ENCODE measurements at regions of chr3 and their contacts with region 1.

Region 1: DNA sequence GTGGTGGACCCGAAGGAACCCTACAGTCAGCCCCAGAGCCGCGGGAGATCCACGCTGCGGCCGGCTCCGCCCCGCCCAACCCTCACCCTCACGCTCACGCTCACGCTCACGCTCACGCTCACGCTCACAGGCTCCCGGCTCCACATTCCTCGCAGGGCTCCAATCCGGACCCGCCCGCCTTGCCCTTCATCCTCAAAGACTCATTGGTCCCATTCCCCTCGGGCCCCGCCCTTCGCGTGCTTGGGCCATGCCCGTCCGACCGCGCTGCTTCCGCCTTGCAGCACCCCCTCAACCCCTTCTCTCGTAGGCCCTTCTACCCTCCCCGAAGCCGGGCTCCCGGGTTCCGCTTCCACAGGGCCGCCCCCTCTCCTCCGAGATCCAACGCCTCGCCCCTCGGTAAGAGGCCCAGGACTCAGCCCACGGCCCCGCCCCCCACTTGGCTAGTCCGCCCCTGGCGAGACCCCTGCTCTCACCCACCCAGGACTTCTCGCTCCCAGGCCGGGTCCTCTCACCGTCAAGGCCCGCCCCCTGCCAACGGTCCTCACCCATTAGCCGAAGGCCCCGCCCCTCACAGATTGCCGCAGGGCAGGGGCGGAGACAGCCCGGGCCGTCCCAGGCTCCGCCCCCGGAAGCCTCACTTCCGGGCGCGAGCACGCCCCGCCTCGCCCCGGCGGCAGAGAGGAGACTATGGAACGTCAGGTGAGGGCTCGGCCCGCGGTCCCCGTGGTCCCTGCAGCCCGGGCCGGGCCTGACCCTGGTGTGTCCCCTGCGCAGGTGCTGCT is at the start of gene APEH:
- DNase-seq: peak; percentile 99
- H3K4me3 ChIP-seq: peak within 1 kb of the TSS; percentile 85 to 93 (median 91)
- H3K27ac ChIP-seq: peak within 1 kb of the TSS; percentile 72 to 93 (median 92)
- H3K4me1 ChIP-seq: peaks cover 14% of the 10 kb centered on the region in 2 donors
- H3K27me3 ChIP-seq: no peaks in the 10 kb centered on the region
- CTCF ChIP-seq: no peak
- POLR2A ChIP-seq: peak; percentile 60 to 81
- total RNA-seq, gene APEH: 92.2 to 219 (median 185) TPM

Region 2: DNA sequence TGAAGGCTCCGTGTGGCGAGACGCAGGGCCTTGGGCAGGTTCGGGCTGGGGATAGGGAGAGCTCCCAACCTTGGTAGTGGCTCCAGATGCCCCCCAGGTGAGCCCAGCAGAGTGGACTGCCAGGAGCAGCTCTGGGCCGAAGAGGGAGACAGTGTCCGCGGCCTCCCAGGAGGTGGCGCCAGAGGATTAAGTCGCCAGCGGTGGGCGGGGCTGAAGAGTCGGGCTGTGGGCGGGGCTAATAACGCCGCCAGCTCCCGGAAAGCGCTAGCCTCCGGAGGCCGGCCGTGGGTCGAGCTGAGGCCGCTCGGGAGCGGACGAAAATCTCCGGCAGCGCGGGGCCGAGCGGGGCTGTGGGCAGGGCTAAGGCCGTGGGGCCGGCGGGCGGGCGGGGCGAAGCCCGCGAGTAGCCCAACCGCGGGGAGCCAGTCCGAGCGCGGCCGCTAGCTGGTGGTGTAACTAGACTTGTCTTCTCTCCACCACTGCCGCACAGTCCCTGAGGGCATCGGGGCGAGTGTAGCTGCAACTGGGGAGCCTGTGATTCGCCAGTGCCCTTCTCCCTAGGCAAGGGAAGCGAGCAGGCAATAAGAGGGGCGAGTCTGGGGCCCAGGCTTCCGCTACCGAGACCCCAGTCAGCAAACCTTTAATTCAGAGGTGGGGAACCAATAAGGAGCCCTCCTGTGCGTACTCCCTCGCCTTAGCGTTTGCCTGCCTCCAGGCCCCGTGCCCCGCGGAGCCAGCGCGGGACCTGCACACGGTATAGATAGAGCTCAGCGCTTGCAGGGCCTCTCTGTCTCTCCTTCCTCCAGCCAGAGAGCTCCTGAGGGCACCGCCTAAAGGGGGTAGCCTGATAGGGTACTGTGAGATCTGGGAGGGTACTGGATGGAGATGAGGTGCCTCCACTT is 134.0 kb before region 1 on chr3:
- intact Hi-C with region 1: loop called (anchors 5 kb)
- DNase-seq: peak; percentile 94 to 95
- H3K4me3 ChIP-seq: peak overlapping the region in 2 of 3 donors; percentile 30 to 35
- H3K27ac ChIP-seq: peak overlapping the region; percentile 58 to 68 (median 60)
- H3K4me1 ChIP-seq: peaks cover 15 to 24% of the 10 kb centered on the region in 2 donors
- H3K27me3 ChIP-seq: no peaks in the 10 kb centered on the region
- CTCF ChIP-seq: peak; percentile 83 to 98 (median 91)
- POLR2A ChIP-seq: peak in 1 of 2 donors; percentile 63

Region 3: DNA sequence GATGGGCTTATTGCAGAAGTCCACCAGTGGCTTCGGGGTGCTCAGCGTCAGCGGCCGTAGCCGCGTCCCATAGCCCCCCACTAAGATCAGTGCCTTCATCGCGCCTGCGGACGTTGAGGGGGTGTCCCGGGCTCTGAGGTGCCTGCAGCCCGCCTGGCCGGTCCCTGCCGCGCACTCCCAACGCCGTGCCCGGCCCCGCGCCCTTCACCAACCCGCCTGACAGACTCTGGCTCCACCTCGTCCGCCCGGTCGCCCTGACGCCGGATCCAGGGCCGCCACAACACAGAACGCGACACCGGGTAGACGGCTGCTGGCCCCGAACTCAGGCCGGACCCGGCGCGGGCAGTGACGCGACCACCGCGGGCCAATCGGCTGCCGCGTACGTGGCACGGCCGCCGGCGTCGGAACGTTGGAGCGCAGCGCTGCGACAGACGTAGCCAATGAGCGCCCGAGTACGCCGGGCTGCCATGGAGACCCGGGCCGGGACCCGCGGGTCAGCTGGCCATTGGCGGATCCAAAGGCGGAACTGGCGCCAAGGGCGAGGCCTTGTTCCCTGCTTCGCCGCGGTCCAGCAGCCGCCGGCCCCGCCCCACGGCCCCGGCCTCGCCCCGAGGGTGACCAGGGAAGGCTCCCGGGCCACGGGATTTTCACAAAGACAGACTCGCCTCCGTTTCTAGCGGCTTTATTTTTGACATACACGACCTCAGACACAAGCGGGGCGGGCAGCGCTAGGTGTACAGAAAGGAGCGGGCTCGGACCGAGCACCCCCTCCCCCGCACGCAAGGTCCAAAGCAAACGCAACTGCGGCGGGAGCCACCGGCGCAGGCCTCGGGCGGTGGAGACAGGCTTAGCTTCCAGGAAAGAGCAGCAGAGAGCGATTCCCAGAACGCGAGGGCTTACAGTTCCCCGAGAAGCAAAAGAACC is 50.0 kb after region 1 on chr3 and contains the start of gene GMPPB:
- intact Hi-C with region 1: loop called (anchors 5 kb)
- DNase-seq: peak; percentile 99
- H3K4me3 ChIP-seq: peak within 1 kb of the TSS; percentile 86 to 98 (median 96)
- H3K27ac ChIP-seq: peak within 1 kb of the TSS; percentile 88 to 98 (median 88)
- H3K4me1 ChIP-seq: peaks cover 23 to 35% of the 10 kb centered on the region in 2 donors
- H3K27me3 ChIP-seq: no peaks in the 10 kb centered on the region
- CTCF ChIP-seq: peak in 1 of 6 experiments; percentile 5
- POLR2A ChIP-seq: peak; percentile 40 to 80
- total RNA-seq, gene GMPPB: 28.5 to 85.6 (median 57.7) TPM